ENCODE measurements at regions of chr5 and their contacts with region 1.

Region 1: GRCh38 chr5:153835891-153836515 is 202.7 kb downstream of the FAM114A2 start:
- DNase-seq: no peak
- ATAC-seq: no peak
- H3K4me3 ChIP-seq: no peak overlapping the region
- H3K27ac ChIP-seq: no peak overlapping the region
- H3K4me1 ChIP-seq: no peaks in the 10 kb centered on the region
- H3K27me3 ChIP-seq: no peaks in the 10 kb centered on the region
- CTCF ChIP-seq: no peak
- POLR2A ChIP-seq: no peak
- RAD21 ChIP-seq: no peak

Region 2: DNA sequence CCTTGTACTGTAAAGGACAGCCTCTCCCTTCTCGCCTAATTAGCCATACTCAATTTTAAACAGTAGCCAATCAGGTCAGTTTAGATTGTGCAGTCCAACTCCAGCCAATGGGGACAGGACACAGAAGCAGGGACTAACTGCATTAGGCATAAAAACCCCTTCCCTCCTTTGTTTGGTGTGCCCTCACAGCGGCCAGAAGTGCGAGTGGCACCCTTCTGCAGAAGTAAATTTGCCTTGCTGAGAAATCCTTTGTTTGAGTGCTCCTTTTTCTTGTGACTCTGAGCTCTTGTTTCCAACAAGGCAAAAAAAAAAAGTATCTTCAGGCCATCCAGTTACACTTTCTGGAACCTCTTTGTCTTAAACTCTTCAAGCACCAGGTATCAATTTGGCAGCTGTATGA is 105.3 kb after region 1 on chr5:
- CTCF ChIA-PET with region 1: no interaction called
- POLR2A ChIA-PET with region 1: no interaction called
- RAD21 ChIA-PET with region 1: no interaction called
- intact Hi-C with region 1: loop called (anchors 10 kb)
- DNase-seq: no peak
- ATAC-seq: no peak
- H3K4me3 ChIP-seq: no peak overlapping the region
- H3K27ac ChIP-seq: no peak overlapping the region
- H3K4me1 ChIP-seq: no peaks in the 10 kb centered on the region
- H3K27me3 ChIP-seq: no peaks in the 10 kb centered on the region
- CTCF ChIP-seq: no peak
- POLR2A ChIP-seq: no peak
- RAD21 ChIP-seq: no peak

Region 3: GRCh38 chr5:154221371-154221896 is 385.4 kb after region 1 on chr5:
- CTCF ChIA-PET with region 1: no interaction called
- POLR2A ChIA-PET with region 1: no interaction called
- RAD21 ChIA-PET with region 1: no interaction called
- intact Hi-C with region 1: no loop called
- DNase-seq: peak; percentile 37
- ATAC-seq: peak; percentile 66
- H3K4me3 ChIP-seq: peak overlapping the region in 1 of 2 experiments; percentile 35; a peak in 2 of 4 replicates
- H3K27ac ChIP-seq: peak overlapping the region; percentile 51
- H3K4me1 ChIP-seq: peaks cover 27 to 45% of the 10 kb centered on the region in 2 experiments
- H3K27me3 ChIP-seq: no peaks in the 10 kb centered on the region
- CTCF ChIP-seq: no peak
- POLR2A ChIP-seq: no peak
- RAD21 ChIP-seq: no peak

Measured in HCT116 (cell line).